ENCODE measurements at regions of chr2 and their contacts with region 1.

Region 1: DNA sequence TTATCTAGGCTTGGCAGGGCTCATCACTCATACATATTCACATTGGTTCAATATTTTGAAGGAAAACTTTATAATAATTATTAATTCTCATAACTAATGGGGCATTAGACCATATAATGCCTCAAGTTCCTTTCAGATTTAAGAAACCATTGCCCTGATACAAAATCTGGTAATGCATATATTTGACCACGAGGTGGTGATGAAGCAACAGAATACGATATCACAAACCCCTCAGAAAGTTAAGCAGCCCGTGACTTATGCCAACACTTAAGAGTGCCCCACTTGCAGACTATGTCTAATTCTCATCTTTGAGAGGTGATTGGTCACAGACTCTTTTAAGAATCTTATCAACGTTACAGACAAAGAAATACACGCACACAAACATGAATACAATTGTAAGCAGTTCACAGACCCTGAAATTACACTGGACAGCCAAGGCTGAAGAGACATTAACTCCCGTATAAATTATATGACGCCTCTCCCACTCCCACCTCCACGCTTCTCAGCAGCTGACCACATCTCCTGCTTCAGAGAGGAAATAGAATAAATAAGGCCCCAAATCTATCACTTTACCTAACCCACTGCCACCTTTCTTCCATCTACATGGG is 20.7 kb upstream of the DNAH6 start:
- DNase-seq: no peak
- ATAC-seq: peak; percentile 48 to 74 (median 67)
- H3K4me3 ChIP-seq: no peak overlapping the region
- H3K27ac ChIP-seq: no peak overlapping the region
- H3K4me1 ChIP-seq: no peaks in the 10 kb centered on the region
- H3K27me3 ChIP-seq: no peaks in the 10 kb centered on the region
- CTCF ChIP-seq: peak; percentile 71

Region 2: DNA sequence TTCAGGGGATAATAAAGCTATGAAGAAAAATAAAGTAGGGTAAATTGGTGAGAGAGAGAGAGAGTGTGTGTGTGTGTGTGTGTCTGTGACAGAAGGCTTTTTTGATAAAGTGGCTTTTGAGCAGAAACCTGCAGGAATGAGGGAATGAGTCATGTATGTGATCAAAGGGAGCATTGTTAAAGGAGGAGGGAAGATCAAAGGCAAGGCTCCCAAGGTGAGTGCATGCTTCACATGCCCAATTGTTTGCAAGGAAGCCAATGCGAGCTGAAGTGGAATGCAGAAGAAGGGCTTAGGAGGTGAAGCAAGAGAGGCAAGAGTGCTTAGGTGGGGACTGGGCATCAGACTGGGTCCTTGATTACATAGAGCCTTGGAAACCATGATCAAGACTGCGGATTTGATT is 117.4 kb after region 1 on chr2:
- intact Hi-C with region 1: no loop called
- DNase-seq: no peak
- ATAC-seq: no peak
- H3K4me3 ChIP-seq: no peak overlapping the region
- H3K27ac ChIP-seq: no peak overlapping the region
- H3K4me1 ChIP-seq: no peaks in the 10 kb centered on the region
- H3K27me3 ChIP-seq: no peaks in the 10 kb centered on the region
- CTCF ChIP-seq: no peak

Region 3: GRCh38 chr2:84631047-84631446 is 135.4 kb after region 1 on chr2:
- intact Hi-C with region 1: loop called in 1 of 2 experiments (anchors 10 kb)
- DNase-seq: no peak
- ATAC-seq: no peak
- H3K4me3 ChIP-seq: no peak overlapping the region
- H3K27ac ChIP-seq: no peak overlapping the region
- H3K4me1 ChIP-seq: no peaks in the 10 kb centered on the region
- H3K27me3 ChIP-seq: no peaks in the 10 kb centered on the region
- CTCF ChIP-seq: no peak

Region 4: GRCh38 chr2:84649487-84650142 is 154.0 kb after region 1 on chr2:
- intact Hi-C with region 1: no loop called
- DNase-seq: no peak
- ATAC-seq: peak in 3 of 4 donors; percentile 44 to 64 (median 53)
- H3K4me3 ChIP-seq: no peak overlapping the region
- H3K27ac ChIP-seq: no peak overlapping the region
- H3K4me1 ChIP-seq: peaks cover 3% of the 10 kb centered on the region
- H3K27me3 ChIP-seq: no peaks in the 10 kb centered on the region
- CTCF ChIP-seq: no peak

Region 5: GRCh38 chr2:84881581-84882414 is 386.2 kb after region 1 on chr2:
- intact Hi-C with region 1: loop called (anchors 2 to 5 kb)
- DNase-seq: peak; percentile 74 to 85
- ATAC-seq: peak; percentile 79 to 92 (median 81)
- H3K4me3 ChIP-seq: peak overlapping the region; percentile 68
- H3K27ac ChIP-seq: no peak overlapping the region
- H3K4me1 ChIP-seq: peaks cover 19% of the 10 kb centered on the region
- H3K27me3 ChIP-seq: peaks cover 0 to 44% (median 6%) of the 10 kb centered on the region in 3 donors
- CTCF ChIP-seq: peak; percentile 68

Region 6: GRCh38 chr2:84925724-84926376 is 430.2 kb after region 1 on chr2:
- intact Hi-C with region 1: loop called in 1 of 2 experiments (anchors 2 kb)
- DNase-seq: peak; percentile 96
- ATAC-seq: peak; percentile 84 to 94 (median 87)
- H3K4me3 ChIP-seq: peak overlapping the region; percentile 55
- H3K27ac ChIP-seq: no peak overlapping the region
- H3K4me1 ChIP-seq: no peaks in the 10 kb centered on the region
- H3K27me3 ChIP-seq: no peaks in the 10 kb centered on the region
- CTCF ChIP-seq: peak; percentile 94

Region 7: GRCh38 chr2:85288244-85288725 is 792.6 kb after region 1 on chr2:
- intact Hi-C with region 1: loop called in 1 of 2 experiments (anchors 10 kb)
- DNase-seq: peak in 1 of 2 donors; percentile 1
- ATAC-seq: no peak
- H3K4me3 ChIP-seq: no peak overlapping the region
- H3K27ac ChIP-seq: no peak overlapping the region
- H3K4me1 ChIP-seq: peaks cover 4% of the 10 kb centered on the region
- H3K27me3 ChIP-seq: no peaks in the 10 kb centered on the region
- CTCF ChIP-seq: no peak

Measured in psoas muscle (tissue), 8 donors.